Gastrocnemius medialis (tissue), 4 donors: ENCODE measurements at regions of chr4 and their contacts with region 1.

Region 1: DNA sequence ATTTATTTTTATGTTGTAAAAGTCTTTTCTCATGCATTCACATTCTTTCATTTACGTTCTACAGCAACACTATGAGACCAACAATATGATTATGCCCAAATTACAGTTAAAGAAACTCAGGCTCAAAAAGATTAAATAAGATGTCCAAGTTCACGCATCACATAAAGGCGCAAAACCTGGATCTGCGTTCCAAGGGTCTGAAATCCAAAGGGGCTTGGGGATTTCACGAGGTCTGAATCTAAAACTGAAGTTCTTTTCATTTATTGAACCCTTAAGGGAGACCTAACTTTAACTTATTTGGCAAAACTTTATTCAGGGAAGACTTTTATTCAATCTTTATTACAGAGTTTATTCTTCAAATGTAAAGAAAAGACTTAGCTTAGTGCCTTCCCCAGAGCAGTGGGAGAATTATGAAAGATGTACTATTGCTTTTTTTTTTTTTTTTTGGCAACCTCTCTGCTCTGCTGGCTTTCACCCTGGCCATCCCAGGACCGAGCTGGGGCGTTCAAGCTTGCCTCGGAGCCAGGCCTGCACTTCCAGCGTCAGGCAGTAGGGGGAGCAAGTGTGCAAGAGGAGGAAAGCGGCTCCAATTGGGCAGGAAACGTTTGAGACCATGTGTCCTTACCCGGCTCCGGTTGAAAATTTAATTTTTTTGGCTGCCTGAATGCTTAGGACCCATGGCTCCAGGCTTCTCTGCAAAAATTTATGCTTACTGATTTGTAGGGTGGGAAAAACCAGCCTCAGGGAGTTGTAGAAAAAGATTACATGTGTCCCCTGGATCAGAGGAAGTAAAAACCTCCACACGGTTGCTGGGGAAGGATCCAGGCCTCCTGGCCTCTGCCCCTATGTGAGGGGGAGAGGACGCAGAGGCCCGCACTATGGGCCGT is 344.3 kb upstream of the KLF3 start:
- DNase-seq: peak; percentile 80 to 91
- ATAC-seq: peak; percentile 73 to 90
- H3K4me3 ChIP-seq: peak overlapping the region; percentile 44 to 50 (median 46)
- H3K27ac ChIP-seq: peak overlapping the region; percentile 77 to 81 (median 81)
- H3K4me1 ChIP-seq: peaks cover 14 to 19% of the 10 kb centered on the region in 2 donors
- H3K27me3 ChIP-seq: no peaks in the 10 kb centered on the region
- CTCF ChIP-seq: peak; percentile 91 to 100 (median 93)
- POLR2A ChIP-seq: no peak

Region 2: GRCh38 chr4:38062088-38062893 is 257.4 kb before region 1 on chr4:
- in situ Hi-C with region 1: loop called in 2 of 4 experiments (anchors 10 to 25 kb)
- intact Hi-C with region 1: no loop called
- DNase-seq: peak; percentile 40 to 62
- ATAC-seq: peak; percentile 83 to 84
- H3K4me3 ChIP-seq: peak overlapping the region; percentile 20 to 43 (median 40)
- H3K27ac ChIP-seq: peak overlapping the region; percentile 3 to 60 (median 58)
- H3K4me1 ChIP-seq: peaks cover 0 to 5% of the 10 kb centered on the region in 2 donors
- H3K27me3 ChIP-seq: no peaks in the 10 kb centered on the region
- CTCF ChIP-seq: peak; percentile 53 to 86 (median 65)
- POLR2A ChIP-seq: no peak

Region 3: DNA sequence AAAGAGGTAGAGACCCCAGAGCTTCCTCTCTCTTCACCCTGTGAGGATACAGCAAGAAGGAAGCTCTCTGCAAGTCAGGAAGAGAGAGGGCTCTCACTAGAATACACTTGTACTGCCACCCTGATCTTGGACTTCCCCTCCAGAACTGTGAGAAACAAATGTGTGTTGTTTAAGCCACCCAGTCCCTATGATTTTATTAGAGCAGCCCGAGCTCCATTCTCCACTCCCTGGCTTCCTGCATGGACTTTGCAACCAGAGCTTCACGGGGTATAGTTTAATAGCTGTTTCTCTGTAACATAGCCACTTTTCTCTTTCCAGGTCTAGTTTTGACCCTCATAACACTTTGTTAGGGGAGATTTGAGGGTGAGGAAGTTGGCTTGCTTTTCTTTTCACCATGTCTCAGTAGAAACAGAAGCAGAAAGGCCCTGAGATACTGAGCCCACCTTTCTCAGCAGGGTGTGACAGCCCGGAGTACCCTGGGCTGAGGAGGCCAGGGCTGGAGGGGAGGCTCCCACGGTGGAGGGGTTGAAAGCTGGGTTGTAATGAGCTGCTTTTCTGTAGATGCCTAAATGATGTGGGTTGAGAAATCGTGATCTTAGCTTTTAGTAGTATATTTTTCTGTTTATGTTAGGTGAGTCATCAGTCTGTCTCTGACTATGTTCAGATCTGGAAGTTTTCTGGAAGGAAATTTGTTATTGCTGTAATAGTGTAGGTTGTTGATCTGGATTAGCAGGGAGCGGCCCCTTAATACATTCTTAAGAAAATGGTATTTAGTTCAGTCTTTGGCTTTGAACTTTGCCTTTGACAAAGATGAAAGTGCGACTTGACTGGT is 240.9 kb before region 1 on chr4:
- in situ Hi-C with region 1: loop called in 2 of 4 experiments (anchors 10 to 25 kb)
- intact Hi-C with region 1: loop called (anchors 5 kb)
- DNase-seq: no peak
- ATAC-seq: no peak
- H3K4me3 ChIP-seq: no peak overlapping the region
- H3K27ac ChIP-seq: peak overlapping the region in 3 of 4 donors; percentile 25 to 37 (median 28)
- H3K4me1 ChIP-seq: peaks cover 17 to 30% of the 10 kb centered on the region in 2 donors
- H3K27me3 ChIP-seq: no peaks in the 10 kb centered on the region
- CTCF ChIP-seq: no peak
- POLR2A ChIP-seq: no peak

Region 4: GRCh38 chr4:38190717-38191178 is 129.0 kb before region 1 on chr4:
- in situ Hi-C with region 1: loop called in 2 of 4 experiments (anchors 10 kb)
- intact Hi-C with region 1: no loop called
- DNase-seq: peak in 1 of 2 donors; percentile 39
- ATAC-seq: peak; percentile 98 to 99
- H3K4me3 ChIP-seq: no peak overlapping the region
- H3K27ac ChIP-seq: peak overlapping the region; percentile 60 to 75 (median 66)
- H3K4me1 ChIP-seq: peaks cover 15 to 16% of the 10 kb centered on the region in 2 donors
- H3K27me3 ChIP-seq: no peaks in the 10 kb centered on the region
- CTCF ChIP-seq: no peak
- POLR2A ChIP-seq: no peak

Region 5: GRCh38 chr4:38430841-38431240 is 111.1 kb after region 1 on chr4:
- in situ Hi-C with region 1: no loop called
- intact Hi-C with region 1: no loop called
- DNase-seq: no peak
- ATAC-seq: no peak
- H3K4me3 ChIP-seq: no peak overlapping the region
- H3K27ac ChIP-seq: no peak overlapping the region
- H3K4me1 ChIP-seq: no peaks in the 10 kb centered on the region
- H3K27me3 ChIP-seq: no peaks in the 10 kb centered on the region
- CTCF ChIP-seq: no peak
- POLR2A ChIP-seq: no peak

Region 6: GRCh38 chr4:38514465-38515146 is 194.9 kb after region 1 on chr4:
- in situ Hi-C with region 1: no loop called
- intact Hi-C with region 1: no loop called
- DNase-seq: no peak
- ATAC-seq: no peak
- H3K4me3 ChIP-seq: no peak overlapping the region
- H3K27ac ChIP-seq: no peak overlapping the region
- H3K4me1 ChIP-seq: no peaks in the 10 kb centered on the region
- H3K27me3 ChIP-seq: no peaks in the 10 kb centered on the region
- CTCF ChIP-seq: no peak
- POLR2A ChIP-seq: no peak

Region 7: GRCh38 chr4:38574559-38575333 is 255.0 kb after region 1 on chr4:
- in situ Hi-C with region 1: no loop called
- intact Hi-C with region 1: loop called (anchors 1 kb)
- DNase-seq: peak; percentile 81 to 90
- ATAC-seq: peak; percentile 97 to 98
- H3K4me3 ChIP-seq: peak overlapping the region in 3 of 4 donors; percentile 30 to 37 (median 30)
- H3K27ac ChIP-seq: peak overlapping the region; percentile 80 to 91 (median 85)
- H3K4me1 ChIP-seq: peaks cover 0 to 14% of the 10 kb centered on the region in 2 donors
- H3K27me3 ChIP-seq: no peaks in the 10 kb centered on the region
- CTCF ChIP-seq: no peak
- POLR2A ChIP-seq: no peak

Region 8: GRCh38 chr4:38675146-38676121 is 355.7 kb after region 1 on chr4:
- in situ Hi-C with region 1: loop called (anchors 5 to 10 kb)
- intact Hi-C with region 1: loop called (anchors 1 kb)
- DNase-seq: peak; percentile 45 to 59
- ATAC-seq: peak; percentile 57 to 61
- H3K4me3 ChIP-seq: no peak overlapping the region
- H3K27ac ChIP-seq: peak overlapping the region; percentile 69 to 98 (median 72)
- H3K4me1 ChIP-seq: peaks cover 78 to 89% of the 10 kb centered on the region in 2 donors
- H3K27me3 ChIP-seq: no peaks in the 10 kb centered on the region
- CTCF ChIP-seq: peak; percentile 87 to 96 (median 91)
- POLR2A ChIP-seq: no peak